ENCODE measurements at regions of chr5 and their contacts with region 1.

Region 1: GRCh38 chr5:132866342-132867045 is at the starts of genes GDF9 and UQCRQ:
- DNase-seq: peak; percentile 97
- ATAC-seq: peak; percentile 99
- H3K4me3 ChIP-seq: peak within 1 kb of the TSS; percentile 67 to 93 (median 81)
- H3K4me3 Mint-ChIP-seq: peak within 1 kb of the TSS; percentile 93
- H3K27ac ChIP-seq: peak within 1 kb of the TSS; percentile 92 to 93
- H3K27ac Mint-ChIP-seq: peak within 1 kb of the TSS; percentile 98
- H3K4me1 ChIP-seq: peaks cover 16 to 19% of the 10 kb centered on the region in 2 donors
- H3K4me1 Mint-ChIP-seq: peaks cover 26% of the 10 kb centered on the region
- H3K27me3 ChIP-seq: no peaks in the 10 kb centered on the region
- H3K27me3 Mint-ChIP-seq: no peaks in the 10 kb centered on the region
- CTCF ChIP-seq: no peak
- total RNA-seq, gene GDF9: 0.51 and 0.67 TPM in 2 replicates
- total RNA-seq, gene UQCRQ: 78.5 and 90.0 TPM in 2 replicates

Region 2: GRCh38 chr5:132369474-132370180 is 496.9 kb before region 1 on chr5 and contains the start of gene SLC22A5:
- CTCF ChIA-PET with region 1: no interaction called
- POLR2A ChIA-PET with region 1: no interaction called
- intact Hi-C with region 1: loop called (anchors 1 kb)
- DNase-seq: peak; percentile 88
- ATAC-seq: peak; percentile 93
- H3K4me3 ChIP-seq: peak within 1 kb of the TSS in 4 of 5 experiments; percentile 52 to 77 (median 68)
- H3K4me3 Mint-ChIP-seq: peak within 1 kb of the TSS; percentile 87
- H3K27ac ChIP-seq: peak within 1 kb of the TSS; percentile 73 to 82
- H3K27ac Mint-ChIP-seq: peak within 1 kb of the TSS; percentile 81
- H3K4me1 ChIP-seq: peaks cover 10 to 15% of the 10 kb centered on the region in 2 donors
- H3K4me1 Mint-ChIP-seq: peaks cover 19% of the 10 kb centered on the region
- H3K27me3 ChIP-seq: no peaks in the 10 kb centered on the region
- H3K27me3 Mint-ChIP-seq: no peaks in the 10 kb centered on the region
- CTCF ChIP-seq: no peak
- total RNA-seq, gene SLC22A5: 12.9 and 13.2 TPM in 2 replicates

Region 3: GRCh38 chr5:132556763-132557477 is 309.6 kb before region 1 on chr5 and contains the start of gene RAD50:
- CTCF ChIA-PET with region 1: no interaction called
- POLR2A ChIA-PET with region 1: no interaction called
- intact Hi-C with region 1: loop called (anchors 5 kb)
- DNase-seq: peak; percentile 91
- ATAC-seq: peak; percentile 94
- H3K4me3 ChIP-seq: peak within 1 kb of the TSS; percentile 62 to 88 (median 81)
- H3K4me3 Mint-ChIP-seq: peak within 1 kb of the TSS; percentile 96
- H3K27ac ChIP-seq: peak within 1 kb of the TSS; percentile 72 to 88
- H3K27ac Mint-ChIP-seq: peak within 1 kb of the TSS; percentile 97
- H3K4me1 ChIP-seq: peaks cover 8 to 21% of the 10 kb centered on the region in 2 donors
- H3K4me1 Mint-ChIP-seq: peaks cover 26% of the 10 kb centered on the region
- H3K27me3 ChIP-seq: no peaks in the 10 kb centered on the region
- H3K27me3 Mint-ChIP-seq: no peaks in the 10 kb centered on the region
- CTCF ChIP-seq: no peak
- total RNA-seq, gene RAD50: 31.7 and 32.7 TPM in 2 replicates

Region 4: DNA sequence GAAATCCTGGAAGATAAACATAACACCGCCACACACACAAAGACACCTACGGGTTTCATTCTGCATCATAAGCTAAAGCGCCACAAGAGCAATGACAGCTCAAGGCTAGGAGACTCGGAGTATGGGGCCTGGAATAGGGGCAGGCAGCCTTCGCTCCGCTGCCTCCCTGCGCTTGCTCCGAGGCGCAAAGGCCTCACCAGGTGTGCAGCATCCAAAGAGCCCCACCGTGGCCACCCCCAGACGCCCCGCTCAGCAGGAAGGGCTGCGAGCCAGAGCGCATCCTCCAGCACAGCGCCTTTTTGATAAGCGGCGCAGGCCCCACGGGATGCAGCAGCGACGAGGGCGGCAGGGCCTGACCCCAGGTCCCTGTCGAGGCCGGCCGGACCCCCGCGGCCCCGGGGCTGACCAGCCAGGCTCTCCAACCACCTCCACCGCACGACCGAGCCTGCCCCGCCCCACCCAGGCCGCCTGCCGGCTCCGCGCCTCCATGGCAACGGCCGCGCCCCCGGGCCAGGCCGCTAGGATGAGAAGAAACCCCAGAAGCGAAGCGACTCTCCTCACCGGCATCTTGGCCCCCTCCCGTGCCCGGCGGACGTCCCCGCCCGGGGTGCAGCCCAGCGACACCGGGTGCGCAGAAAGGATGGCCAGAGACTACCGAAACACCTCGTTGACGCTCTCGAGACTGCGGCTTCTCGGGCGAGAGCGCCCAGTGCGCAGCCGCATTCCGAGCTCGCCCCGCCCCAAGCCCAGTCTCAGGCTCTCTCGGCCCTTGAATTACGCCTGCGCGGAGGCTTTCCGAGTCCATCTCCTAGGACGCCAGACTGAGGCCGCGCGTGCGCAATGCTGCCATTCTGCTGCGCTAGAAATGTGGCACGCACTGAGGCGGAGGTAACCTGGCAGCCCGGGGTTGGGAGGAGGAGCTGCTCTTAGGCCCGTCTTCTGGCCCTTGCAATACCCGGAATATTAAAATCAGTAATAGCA is 129.4 kb before region 1 on chr5 and contains the start of gene KIF3A:
- CTCF ChIA-PET with region 1: no interaction called
- POLR2A ChIA-PET with region 1: no interaction called
- intact Hi-C with region 1: loop called (anchors 1 kb)
- DNase-seq: peak; percentile 98
- ATAC-seq: peak; percentile 90
- H3K4me3 ChIP-seq: peak within 1 kb of the TSS; percentile 57 to 80 (median 74)
- H3K4me3 Mint-ChIP-seq: peak within 1 kb of the TSS; percentile 89
- H3K27ac ChIP-seq: peak within 1 kb of the TSS; percentile 34 to 58
- H3K27ac Mint-ChIP-seq: peak within 1 kb of the TSS; percentile 96
- H3K4me1 ChIP-seq: peaks cover 11 to 13% of the 10 kb centered on the region in 2 donors
- H3K4me1 Mint-ChIP-seq: peaks cover 22% of the 10 kb centered on the region
- H3K27me3 ChIP-seq: peaks cover 0 to 3% (median 2%) of the 10 kb centered on the region in 4 experiments
- H3K27me3 Mint-ChIP-seq: peaks cover 10% of the 10 kb centered on the region
- CTCF ChIP-seq: peak; percentile 9
- total RNA-seq, gene KIF3A: 13.6 and 16.0 TPM in 2 replicates

Region 5: DNA sequence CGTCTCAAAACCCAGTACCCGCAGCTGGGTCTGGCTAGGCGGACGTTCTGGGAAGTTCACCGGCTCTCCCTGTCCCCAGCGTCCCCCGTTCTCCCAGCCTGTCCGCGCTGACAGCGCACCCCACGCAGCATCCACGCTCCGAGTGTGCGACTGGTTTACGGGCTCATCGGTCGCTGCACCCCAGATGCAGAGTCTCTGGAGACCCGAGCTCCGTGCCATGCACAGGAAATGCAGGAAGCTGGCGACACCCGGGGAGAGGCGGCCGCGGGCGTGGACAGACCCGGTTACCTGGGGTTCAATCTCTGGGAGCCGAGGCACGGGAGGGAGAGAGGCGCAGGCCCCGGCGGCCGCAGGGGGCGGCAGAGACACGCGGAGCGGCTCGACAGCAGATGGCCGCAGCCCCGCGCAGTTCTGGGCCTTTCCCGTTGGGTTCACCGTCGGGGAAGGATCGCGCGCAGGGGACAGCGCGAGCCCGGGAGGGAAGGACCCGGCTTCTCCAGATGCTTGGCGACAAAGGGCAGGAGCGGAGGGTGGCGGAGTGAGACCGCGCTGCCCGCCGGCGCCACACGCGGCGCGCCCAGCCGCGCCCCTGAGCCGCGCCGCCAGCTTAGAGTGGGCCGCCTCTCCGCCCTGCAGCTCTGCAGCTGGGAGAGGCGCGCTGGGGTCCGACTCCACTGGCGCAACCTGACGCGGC is 36.6 kb before region 1 on chr5:
- CTCF ChIA-PET with region 1: interaction called, 13 read pairs
- POLR2A ChIA-PET with region 1: interaction called, 3 read pairs
- intact Hi-C with region 1: loop called (anchors 1 kb)
- DNase-seq: peak; percentile 86
- ATAC-seq: peak; percentile 89
- H3K4me3 ChIP-seq: peak overlapping the region in 4 of 5 experiments; percentile 35 to 73 (median 57)
- H3K4me3 Mint-ChIP-seq: peak overlapping the region; percentile 93
- H3K27ac ChIP-seq: no peak overlapping the region
- H3K27ac Mint-ChIP-seq: peak overlapping the region; percentile 71
- H3K4me1 ChIP-seq: peaks cover 21 to 27% of the 10 kb centered on the region in 2 donors
- H3K4me1 Mint-ChIP-seq: peaks cover 18% of the 10 kb centered on the region
- H3K27me3 ChIP-seq: peaks cover 0 to 54% (median 32%) of the 10 kb centered on the region in 4 experiments
- H3K27me3 Mint-ChIP-seq: peaks cover 26% of the 10 kb centered on the region
- CTCF ChIP-seq: peak; percentile 93

Region 6: GRCh38 chr5:133130387-133131118 is 264.1 kb after region 1 on chr5:
- CTCF ChIA-PET with region 1: no interaction called
- POLR2A ChIA-PET with region 1: no interaction called
- intact Hi-C with region 1: no loop called
- DNase-seq: no peak
- ATAC-seq: no peak
- H3K4me3 ChIP-seq: no peak overlapping the region
- H3K4me3 Mint-ChIP-seq: no peak overlapping the region
- H3K27ac ChIP-seq: no peak overlapping the region
- H3K27ac Mint-ChIP-seq: no peak overlapping the region
- H3K4me1 ChIP-seq: no peaks in the 10 kb centered on the region
- H3K4me1 Mint-ChIP-seq: no peaks in the 10 kb centered on the region
- H3K27me3 ChIP-seq: no peaks in the 10 kb centered on the region
- H3K27me3 Mint-ChIP-seq: peaks cover 4% of the 10 kb centered on the region
- CTCF ChIP-seq: no peak